Caco-2 (cell line): ENCODE measurements at regions of chr15 and their contacts with region 1.

Region 1: DNA sequence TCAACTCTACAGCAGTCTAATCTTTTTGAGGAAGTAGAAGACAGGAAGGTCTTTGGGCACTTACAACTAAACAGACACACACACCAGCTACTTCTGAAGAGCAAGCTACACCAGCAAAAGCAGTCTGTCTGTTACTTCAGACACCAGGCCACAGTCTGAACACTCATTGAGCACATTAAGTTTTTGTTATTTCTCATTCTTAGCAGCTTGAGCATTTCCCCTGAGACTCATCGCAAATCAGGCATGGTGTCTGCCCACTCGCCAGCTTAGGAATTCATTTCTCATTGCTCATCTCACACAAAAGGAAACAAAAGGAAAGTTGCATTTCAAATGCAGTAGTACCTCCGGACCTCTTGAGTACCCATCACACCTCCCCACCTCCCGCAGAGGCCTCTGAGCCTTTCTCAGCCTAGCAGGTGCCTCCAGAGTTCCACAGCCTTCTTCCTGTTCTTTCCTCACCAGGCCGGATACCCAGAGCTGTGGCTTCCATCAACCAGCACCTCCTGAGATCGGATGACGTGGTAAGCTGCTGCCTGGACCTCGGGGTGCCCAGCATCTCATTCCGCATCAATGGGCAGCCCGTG is 302.0 kb downstream of the RYR3 start:
- DNase-seq: no peak
- H3K4me3 ChIP-seq: no peak overlapping the region
- H3K4me3 Mint-ChIP-seq: no peak overlapping the region
- H3K27ac Mint-ChIP-seq: no peak overlapping the region
- H3K4me1 ChIP-seq: no peaks in the 10 kb centered on the region
- H3K4me1 Mint-ChIP-seq: no peaks in the 10 kb centered on the region
- H3K27me3 ChIP-seq: no peaks in the 10 kb centered on the region
- H3K27me3 Mint-ChIP-seq: peaks cover 6% of the 10 kb centered on the region
- CTCF ChIP-seq: no peak

Region 2: DNA sequence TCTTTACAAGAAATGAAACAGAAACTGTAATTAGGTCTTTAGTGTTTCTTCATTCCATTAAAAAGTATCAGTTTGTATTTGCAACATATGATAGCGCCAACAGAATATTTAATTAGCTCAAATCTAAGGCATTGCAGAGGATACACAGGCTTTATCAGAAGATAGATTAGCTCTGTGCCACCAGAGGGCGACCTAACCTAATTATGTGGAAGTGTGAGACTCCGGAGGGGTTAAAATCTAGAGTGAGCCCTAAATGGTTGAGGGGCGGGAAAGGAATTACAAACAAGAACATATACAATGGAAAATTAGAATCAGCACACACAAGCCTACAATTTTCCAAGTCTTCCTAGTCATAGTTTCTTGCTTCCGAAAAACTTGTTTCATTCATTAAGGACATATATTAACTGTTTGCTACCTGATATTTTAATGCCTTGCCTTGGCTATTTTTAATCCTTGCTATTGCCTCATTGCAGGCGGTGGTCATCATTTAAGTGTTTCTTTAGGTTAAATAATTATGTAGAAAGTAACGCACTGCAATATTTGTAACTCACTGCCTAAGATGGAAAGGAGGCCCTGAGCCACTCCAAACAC is 320.0 kb before region 1 on chr15:
- CTCF ChIA-PET with region 1: interaction called, 4 read pairs
- POLR2A ChIA-PET with region 1: no interaction called
- intact Hi-C with region 1: loop called (anchors 10 kb)
- DNase-seq: peak; percentile 50 to 59
- H3K4me3 ChIP-seq: no peak overlapping the region
- H3K4me3 Mint-ChIP-seq: no peak overlapping the region
- H3K27ac Mint-ChIP-seq: no peak overlapping the region
- H3K4me1 ChIP-seq: no peaks in the 10 kb centered on the region
- H3K4me1 Mint-ChIP-seq: no peaks in the 10 kb centered on the region
- H3K27me3 ChIP-seq: no peaks in the 10 kb centered on the region
- H3K27me3 Mint-ChIP-seq: peaks cover 4% of the 10 kb centered on the region
- CTCF ChIP-seq: peak; percentile 60 to 87

Region 3: GRCh38 chr15:33700695-33701304 is 88.0 kb after region 1 on chr15:
- CTCF ChIA-PET with region 1: no interaction called
- POLR2A ChIA-PET with region 1: no interaction called
- intact Hi-C with region 1: no loop called
- DNase-seq: peak; percentile 69 to 72
- H3K4me3 ChIP-seq: no peak overlapping the region
- H3K4me3 Mint-ChIP-seq: no peak overlapping the region
- H3K27ac Mint-ChIP-seq: no peak overlapping the region
- H3K4me1 ChIP-seq: no peaks in the 10 kb centered on the region
- H3K4me1 Mint-ChIP-seq: no peaks in the 10 kb centered on the region
- H3K27me3 ChIP-seq: no peaks in the 10 kb centered on the region
- H3K27me3 Mint-ChIP-seq: peaks cover 9% of the 10 kb centered on the region
- CTCF ChIP-seq: peak; percentile 86 to 93